ENCODE measurements at regions of chr12 and their contacts with region 1.

Region 1: GRCh38 chr12:42023733-42024494 is 120.8 kb downstream of the GXYLT1 start:
- DNase-seq: peak; percentile 66 to 86 (median 77)
- H3K4me3 ChIP-seq: peak overlapping the region; percentile 27
- H3K27ac ChIP-seq: no peak overlapping the region
- H3K4me1 ChIP-seq: peaks cover 2% of the 10 kb centered on the region
- H3K27me3 ChIP-seq: no peaks in the 10 kb centered on the region
- CTCF ChIP-seq: peak; percentile 66 to 73 (median 71)
- EP300 ChIP-seq: no peak
- POLR2A ChIP-seq: no peak

Region 2: DNA sequence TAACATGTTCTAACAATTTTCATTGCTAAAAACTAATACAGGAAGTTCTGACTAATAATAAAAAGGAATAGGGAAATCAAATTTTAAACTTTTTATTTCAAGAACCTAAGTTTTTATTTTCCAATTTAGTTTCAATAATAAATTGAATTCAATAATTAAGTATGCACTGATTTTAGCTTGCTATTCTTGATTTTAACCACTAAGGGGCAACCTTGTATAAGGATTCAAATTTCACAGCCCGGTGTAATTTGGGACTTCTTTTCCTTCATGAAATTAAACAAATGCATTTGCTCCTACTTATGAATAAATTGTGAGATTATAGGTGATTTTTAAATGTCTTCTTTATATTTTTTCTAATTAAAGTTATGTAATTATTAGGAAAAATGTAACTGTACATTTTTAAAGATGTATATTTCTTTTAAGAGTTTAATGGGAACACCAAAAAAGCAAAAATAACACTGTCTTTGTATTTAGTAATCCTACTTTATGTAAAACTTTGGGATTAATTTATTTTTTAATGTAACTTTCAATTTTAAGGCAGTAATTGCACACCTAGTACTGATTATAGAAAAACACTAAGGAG is 1077.2 kb before region 1 on chr12:
- intact Hi-C with region 1: loop called in 3 of 4 experiments (anchors 10 kb)
- DNase-seq: no peak
- H3K4me3 ChIP-seq: no peak overlapping the region
- H3K27ac ChIP-seq: no peak overlapping the region
- H3K4me1 ChIP-seq: no peaks in the 10 kb centered on the region
- H3K27me3 ChIP-seq: no peaks in the 10 kb centered on the region
- CTCF ChIP-seq: peak in 2 of 3 donors; percentile 39 to 69
- EP300 ChIP-seq: no peak
- POLR2A ChIP-seq: no peak

Region 3: GRCh38 chr12:41264281-41264680 is 759.6 kb before region 1 on chr12:
- intact Hi-C with region 1: loop called in 1 of 4 experiments (anchors 10 kb)
- DNase-seq: no peak
- H3K4me3 ChIP-seq: no peak overlapping the region
- H3K27ac ChIP-seq: no peak overlapping the region
- H3K4me1 ChIP-seq: no peaks in the 10 kb centered on the region
- H3K27me3 ChIP-seq: no peaks in the 10 kb centered on the region
- CTCF ChIP-seq: no peak
- EP300 ChIP-seq: no peak
- POLR2A ChIP-seq: no peak

Region 4: GRCh38 chr12:41277116-41277945 is 746.6 kb before region 1 on chr12:
- intact Hi-C with region 1: loop called in 1 of 4 experiments (anchors 10 kb)
- DNase-seq: no peak
- H3K4me3 ChIP-seq: no peak overlapping the region
- H3K27ac ChIP-seq: no peak overlapping the region
- H3K4me1 ChIP-seq: no peaks in the 10 kb centered on the region
- H3K27me3 ChIP-seq: no peaks in the 10 kb centered on the region
- CTCF ChIP-seq: peak in 1 of 3 donors; percentile 24
- EP300 ChIP-seq: no peak
- POLR2A ChIP-seq: no peak

Region 5: GRCh38 chr12:42104087-42104486 is 80.2 kb after region 1 on chr12:
- intact Hi-C with region 1: no loop called
- DNase-seq: no peak
- H3K4me3 ChIP-seq: no peak overlapping the region
- H3K27ac ChIP-seq: no peak overlapping the region
- H3K4me1 ChIP-seq: no peaks in the 10 kb centered on the region
- H3K27me3 ChIP-seq: no peaks in the 10 kb centered on the region
- CTCF ChIP-seq: no peak
- EP300 ChIP-seq: no peak
- POLR2A ChIP-seq: no peak

Measured in ovary (tissue), 10 donors.